ENCODE measurements at regions of chr12 and their contacts with region 1.

Region 1: GRCh38 chr12:50275556-50275955 is 7.8 kb downstream of the LIMA1 start:
- DNase-seq: no peak
- H3K4me3 ChIP-seq: no peak overlapping the region
- H3K27ac ChIP-seq: peak overlapping the region in 6 of 8 donors; percentile 46 to 88 (median 62)
- H3K4me1 ChIP-seq: peaks cover 0 to 38% (median 17%) of the 10 kb centered on the region in 6 donors
- H3K27me3 ChIP-seq: no peaks in the 10 kb centered on the region
- CTCF ChIP-seq: no peak
- POLR2A ChIP-seq: no peak

Region 2: DNA sequence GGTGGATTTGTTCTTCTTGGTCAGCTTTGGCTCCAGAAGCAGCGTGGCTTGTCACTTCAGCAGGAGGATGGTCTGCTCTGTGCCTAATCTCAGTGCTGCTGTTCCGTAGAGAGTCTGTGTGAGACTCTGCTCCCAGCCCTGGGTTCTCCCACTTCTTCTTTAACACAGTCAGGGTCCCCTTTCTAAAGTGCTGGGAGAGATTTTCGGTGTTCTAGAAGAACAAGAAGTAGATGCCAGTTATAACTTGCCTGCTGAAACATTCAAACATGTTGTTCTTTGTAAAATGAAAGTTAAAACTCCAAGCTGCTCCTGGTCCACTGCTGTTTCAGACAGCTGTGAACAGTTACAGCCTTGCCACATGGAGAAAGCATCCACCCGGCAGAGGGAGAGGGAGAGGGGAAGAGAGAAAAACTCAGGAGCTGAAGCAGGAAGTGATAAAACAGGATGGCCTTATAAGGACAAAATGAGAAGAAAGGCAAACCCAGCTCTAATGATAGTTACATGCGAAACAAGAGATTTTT is 53.2 kb before region 1 on chr12:
- intact Hi-C with region 1: loop called (anchors 10 kb)
- DNase-seq: no peak
- H3K4me3 ChIP-seq: peak overlapping the region; percentile 36 to 69 (median 45)
- H3K27ac ChIP-seq: peak overlapping the region; percentile 73 to 87 (median 84)
- H3K4me1 ChIP-seq: peaks cover 10 to 63% (median 42%) of the 10 kb centered on the region in 6 donors
- H3K27me3 ChIP-seq: no peaks in the 10 kb centered on the region
- CTCF ChIP-seq: peak in 7 of 11 experiments; percentile 13 to 45 (median 30)
- POLR2A ChIP-seq: peak in 1 of 3 donors; percentile 4

Region 3: DNA sequence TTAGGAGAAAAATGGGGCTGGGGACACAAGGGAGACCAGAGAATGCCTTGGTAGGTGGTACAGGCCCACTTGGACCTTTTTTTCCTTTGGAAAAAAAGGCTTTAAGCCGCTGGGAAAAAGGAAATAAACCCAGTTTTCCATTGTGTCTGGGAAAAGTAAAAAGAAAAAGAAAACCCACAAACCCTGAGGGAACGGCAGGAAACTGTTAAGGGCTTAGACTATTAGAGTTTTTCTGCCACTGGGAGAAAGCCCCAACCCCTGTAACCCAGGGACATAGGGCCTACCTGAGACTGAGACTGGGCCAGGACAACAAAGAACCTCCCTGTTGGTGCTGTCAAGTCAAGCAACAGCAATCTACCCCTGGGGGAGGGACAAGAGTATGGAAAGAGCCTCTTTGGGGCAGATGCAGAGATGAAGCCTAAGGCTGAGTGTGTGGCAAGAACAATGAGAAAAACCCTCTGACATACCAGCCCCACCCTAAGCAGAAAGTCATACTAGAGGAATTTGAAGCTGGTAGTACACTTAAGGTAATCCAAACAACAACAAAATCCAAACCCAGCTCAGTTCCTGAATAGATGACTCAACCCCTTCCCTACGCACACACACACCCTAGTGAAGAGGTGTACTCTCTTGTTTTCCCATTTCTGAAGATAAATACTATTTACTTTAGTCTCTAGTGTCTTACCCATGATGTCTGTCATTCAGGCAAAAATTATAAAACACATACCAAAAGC is 511.1 kb after region 1 on chr12:
- intact Hi-C with region 1: no loop called
- DNase-seq: no peak
- H3K4me3 ChIP-seq: no peak overlapping the region
- H3K27ac ChIP-seq: no peak overlapping the region
- H3K4me1 ChIP-seq: peaks cover 0 to 12% (median 0%) of the 10 kb centered on the region in 6 donors
- H3K27me3 ChIP-seq: no peaks in the 10 kb centered on the region
- CTCF ChIP-seq: no peak
- POLR2A ChIP-seq: no peak

Region 4: GRCh38 chr12:51687614-51688013 is 1412.1 kb after region 1 on chr12:
- intact Hi-C with region 1: no loop called
- DNase-seq: no peak
- H3K4me3 ChIP-seq: no peak overlapping the region
- H3K27ac ChIP-seq: peak overlapping the region in 2 of 8 donors; percentile 17 to 42
- H3K4me1 ChIP-seq: peaks cover 0 to 14% (median 0%) of the 10 kb centered on the region in 6 donors
- H3K27me3 ChIP-seq: no peaks in the 10 kb centered on the region
- CTCF ChIP-seq: no peak
- POLR2A ChIP-seq: no peak

Measured in spleen (tissue), 13 donors.